PC-9 (cell line): ENCODE measurements at regions of chr19 and their contacts with region 1.

Region 1: DNA sequence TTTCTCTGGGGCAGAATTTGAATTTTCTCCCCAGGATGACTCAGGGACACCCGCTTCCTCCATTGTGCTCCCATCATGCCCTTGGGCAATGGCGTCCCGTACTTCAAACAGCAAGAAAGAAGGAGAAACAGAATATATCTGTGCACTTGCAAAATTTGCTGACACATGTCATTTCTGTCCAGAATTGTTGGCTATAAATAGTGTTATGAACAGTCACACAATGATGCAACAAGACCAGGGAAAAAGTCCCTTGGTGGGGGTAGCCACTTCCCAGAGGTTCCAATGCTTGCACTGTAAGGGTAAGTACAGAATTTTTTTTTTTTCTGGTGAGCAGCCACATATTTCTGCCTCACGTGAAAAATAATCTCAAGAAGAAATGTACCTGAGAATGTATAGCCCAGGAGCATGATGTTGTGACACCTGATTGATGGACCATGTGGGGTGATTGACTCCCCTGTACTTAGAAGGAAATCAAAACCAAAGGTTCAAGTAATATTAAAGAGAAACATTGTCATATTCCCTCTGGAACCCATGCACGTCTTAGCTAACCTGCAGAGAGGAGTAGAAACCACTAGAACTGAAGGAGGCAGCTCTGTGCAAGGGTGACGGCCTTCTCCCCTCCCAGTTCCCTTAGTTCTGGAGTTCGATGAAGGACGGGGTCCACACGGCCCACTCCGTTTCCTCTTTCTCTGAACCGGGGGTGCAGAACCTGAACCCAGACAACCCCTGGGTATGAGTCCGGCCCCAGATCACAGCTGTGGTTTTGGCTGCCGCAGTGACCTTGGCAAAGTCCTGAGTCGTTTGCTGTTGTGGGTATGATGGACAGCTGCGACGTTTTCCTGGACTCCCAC is 9.3 kb upstream of the LAIR1 start:
- DNase-seq: no peak
- H3K4me3 ChIP-seq: no peak overlapping the region
- H3K27ac ChIP-seq: no peak overlapping the region
- H3K4me1 ChIP-seq: no peaks in the 10 kb centered on the region
- H3K27me3 ChIP-seq: peaks cover 84% of the 10 kb centered on the region
- CTCF ChIP-seq: no peak

Region 2: GRCh38 chr19:53212703-53213320 is 1161.2 kb before region 1 on chr19:
- CTCF ChIA-PET with region 1: interaction called, 10 read pairs
- POLR2A ChIA-PET with region 1: no interaction called
- intact Hi-C with region 1: no loop called
- DNase-seq: no peak
- H3K4me3 ChIP-seq: no peak overlapping the region
- H3K27ac ChIP-seq: no peak overlapping the region
- H3K4me1 ChIP-seq: no peaks in the 10 kb centered on the region
- H3K27me3 ChIP-seq: no peaks in the 10 kb centered on the region
- CTCF ChIP-seq: no peak

Region 3: GRCh38 chr19:54218960-54219661 is 154.9 kb before region 1 on chr19:
- CTCF ChIA-PET with region 1: no interaction called
- POLR2A ChIA-PET with region 1: no interaction called
- intact Hi-C with region 1: no loop called
- DNase-seq: no peak
- H3K4me3 ChIP-seq: no peak overlapping the region
- H3K27ac ChIP-seq: no peak overlapping the region
- H3K4me1 ChIP-seq: no peaks in the 10 kb centered on the region
- H3K27me3 ChIP-seq: peaks cover 11% of the 10 kb centered on the region; the same call in 1 of the 2 replicates
- CTCF ChIP-seq: no peak

Region 4: GRCh38 chr19:54357381-54357780 is 16.6 kb before region 1 on chr19:
- CTCF ChIA-PET with region 1: interaction called, 10 read pairs
- POLR2A ChIA-PET with region 1: no interaction called
- intact Hi-C with region 1: no loop called
- DNase-seq: no peak
- H3K4me3 ChIP-seq: no peak overlapping the region
- H3K27ac ChIP-seq: no peak overlapping the region
- H3K4me1 ChIP-seq: no peaks in the 10 kb centered on the region
- H3K27me3 ChIP-seq: peaks cover 58% of the 10 kb centered on the region
- CTCF ChIP-seq: no peak